ENCODE measurements at regions of chr3 and their contacts with region 1.

Region 1: GRCh38 chr3:12841149-12841970 is at the start of gene RPL32:
- DNase-seq: peak; percentile 94
- H3K4me3 ChIP-seq: peak within 1 kb of the TSS; percentile 55 to 73 (median 62)
- H3K27ac ChIP-seq: peak within 1 kb of the TSS; percentile 84 to 89 (median 88)
- H3K4me1 ChIP-seq: peaks cover 0 to 42% (median 34%) of the 10 kb centered on the region in 4 donors
- H3K27me3 ChIP-seq: no peaks in the 10 kb centered on the region
- CTCF ChIP-seq: peak; percentile 72 to 87 (median 76)
- EP300 ChIP-seq: no peak
- POLR2A ChIP-seq: peak; percentile 80 to 89
- total RNA-seq, gene RPL32: 920 to 2,637 (median 1,036) TPM

Region 2: GRCh38 chr3:11735638-11736037 is 1105.7 kb before region 1 on chr3:
- intact Hi-C with region 1: no loop called
- DNase-seq: no peak
- H3K4me3 ChIP-seq: no peak overlapping the region
- H3K27ac ChIP-seq: no peak overlapping the region
- H3K4me1 ChIP-seq: no peaks in the 10 kb centered on the region
- H3K27me3 ChIP-seq: no peaks in the 10 kb centered on the region
- CTCF ChIP-seq: no peak
- EP300 ChIP-seq: no peak
- POLR2A ChIP-seq: no peak

Region 3: GRCh38 chr3:12796171-12797123 is 44.9 kb before region 1 on chr3 and contains the start of gene CAND2:
- intact Hi-C with region 1: loop called (anchors 5 kb)
- DNase-seq: peak; percentile 88
- H3K4me3 ChIP-seq: peak within 1 kb of the TSS; percentile 54 to 79 (median 68)
- H3K27ac ChIP-seq: peak within 1 kb of the TSS; percentile 90 to 91 (median 90)
- H3K4me1 ChIP-seq: peaks cover 0 to 18% (median 15%) of the 10 kb centered on the region in 4 donors
- H3K27me3 ChIP-seq: no peaks in the 10 kb centered on the region
- CTCF ChIP-seq: no peak
- EP300 ChIP-seq: no peak
- POLR2A ChIP-seq: peak in 1 of 2 donors; percentile 46
- total RNA-seq, gene CAND2: 10.7 to 24.9 (median 14.6) TPM

Region 4: GRCh38 chr3:12810013-12810780 is 31.2 kb before region 1 on chr3:
- intact Hi-C with region 1: loop called (anchors 2 kb)
- DNase-seq: peak; percentile 98
- H3K4me3 ChIP-seq: peak overlapping the region; percentile 42 to 59 (median 57)
- H3K27ac ChIP-seq: peak overlapping the region; percentile 82 to 86 (median 85)
- H3K4me1 ChIP-seq: peaks cover 0 to 20% (median 16%) of the 10 kb centered on the region in 4 donors
- H3K27me3 ChIP-seq: no peaks in the 10 kb centered on the region
- CTCF ChIP-seq: peak; percentile 82 to 97 (median 92)
- EP300 ChIP-seq: no peak
- POLR2A ChIP-seq: no peak

Measured in sigmoid colon (tissue), 7 donors.